ENCODE measurements at regions of chr16 and their contacts with region 1.

Region 1: DNA sequence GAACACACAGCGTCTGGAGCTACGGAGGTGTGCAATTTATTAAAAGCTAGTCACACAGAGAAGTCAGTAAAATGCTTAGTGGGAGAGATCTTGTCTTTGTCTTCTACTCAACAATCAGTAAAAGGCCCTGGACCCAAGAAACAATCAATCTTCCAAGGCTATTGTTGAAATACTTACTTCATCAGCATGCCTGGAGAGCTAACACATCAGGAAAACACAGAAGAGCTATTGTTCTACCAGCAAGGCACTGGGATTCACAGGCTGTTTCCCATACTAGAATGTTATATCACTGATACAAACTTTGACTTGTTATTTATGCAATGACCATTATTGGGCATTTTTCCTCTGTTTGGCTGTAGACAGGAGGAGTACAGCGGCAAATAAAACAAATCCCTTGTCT is 247.8 kb upstream of the ERCC4 start:
- ATAC-seq: peak in 5 of 8 experiments; percentile 96 to 98 (median 96)
- H3K4me3 ChIP-seq: no peak overlapping the region
- H3K27ac ChIP-seq: peak overlapping the region; percentile 59 to 76
- H3K4me1 ChIP-seq: peaks cover 3 to 4% of the 10 kb centered on the region in 2 donors

Region 2: GRCh38 chr16:13552062-13552959 is 119.9 kb before region 1 on chr16:
- in situ Hi-C with region 1: loop called in 1 of 9 experiments (anchors 25 kb)
- ATAC-seq: peak in 3 of 8 experiments; percentile 30 to 47 (median 42)
- H3K4me3 ChIP-seq: no peak overlapping the region
- H3K27ac ChIP-seq: no peak overlapping the region
- H3K4me1 ChIP-seq: peaks cover 3 to 7% of the 10 kb centered on the region in 2 donors